ENCODE measurements at regions of chr15 and their contacts with region 1.

Region 1: DNA sequence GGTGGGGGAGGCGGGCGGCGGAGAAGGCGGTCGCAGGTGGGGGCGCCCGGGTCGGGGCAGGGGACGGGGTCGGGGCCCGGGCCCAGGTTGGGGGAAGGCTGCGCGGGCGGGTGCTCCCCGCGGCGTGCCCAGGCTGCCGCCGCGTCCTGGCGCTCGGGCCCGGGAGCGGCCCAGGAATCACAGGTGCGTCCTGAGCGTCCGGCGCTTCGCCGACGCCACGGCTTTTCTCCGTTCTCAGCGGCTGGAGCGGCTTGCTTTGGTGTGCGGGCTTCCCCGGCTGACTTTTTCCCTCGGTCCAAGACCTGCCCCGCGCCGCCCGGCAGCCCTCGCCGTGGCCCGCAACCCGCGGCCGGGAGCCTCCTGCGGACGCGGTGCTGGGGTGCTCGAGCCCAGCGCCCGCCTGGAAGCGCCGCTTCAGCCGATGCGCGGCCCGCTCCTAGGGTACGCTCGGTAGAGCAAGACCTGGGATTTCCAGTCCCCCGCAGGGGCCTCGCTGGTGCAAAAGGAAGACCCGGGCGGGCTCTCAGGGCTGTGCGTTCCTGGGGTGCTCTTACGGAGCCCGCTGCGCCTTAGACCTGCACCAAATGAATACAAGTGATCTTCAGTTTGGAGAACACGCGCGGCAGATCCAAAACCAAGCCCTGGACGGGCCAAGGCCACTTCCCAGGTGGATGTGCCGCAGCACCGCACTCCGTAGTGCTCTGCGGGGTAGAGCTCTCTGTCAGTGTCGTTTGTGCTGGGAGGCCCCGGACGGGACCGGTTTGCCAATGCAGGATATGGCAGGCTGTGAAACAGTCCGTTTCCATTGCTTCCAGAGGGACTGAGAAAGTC is 639 bp downstream of the NIPA1 start:
- DNase-seq: peak in 2 of 3 donors; percentile 65 to 69
- ATAC-seq: peak; percentile 27 to 38
- H3K4me3 ChIP-seq: peak overlapping the region; percentile 96
- H3K27ac ChIP-seq: peak overlapping the region; percentile 2
- H3K4me1 ChIP-seq: no peaks in the 10 kb centered on the region
- H3K27me3 ChIP-seq: no peaks in the 10 kb centered on the region

Region 2: DNA sequence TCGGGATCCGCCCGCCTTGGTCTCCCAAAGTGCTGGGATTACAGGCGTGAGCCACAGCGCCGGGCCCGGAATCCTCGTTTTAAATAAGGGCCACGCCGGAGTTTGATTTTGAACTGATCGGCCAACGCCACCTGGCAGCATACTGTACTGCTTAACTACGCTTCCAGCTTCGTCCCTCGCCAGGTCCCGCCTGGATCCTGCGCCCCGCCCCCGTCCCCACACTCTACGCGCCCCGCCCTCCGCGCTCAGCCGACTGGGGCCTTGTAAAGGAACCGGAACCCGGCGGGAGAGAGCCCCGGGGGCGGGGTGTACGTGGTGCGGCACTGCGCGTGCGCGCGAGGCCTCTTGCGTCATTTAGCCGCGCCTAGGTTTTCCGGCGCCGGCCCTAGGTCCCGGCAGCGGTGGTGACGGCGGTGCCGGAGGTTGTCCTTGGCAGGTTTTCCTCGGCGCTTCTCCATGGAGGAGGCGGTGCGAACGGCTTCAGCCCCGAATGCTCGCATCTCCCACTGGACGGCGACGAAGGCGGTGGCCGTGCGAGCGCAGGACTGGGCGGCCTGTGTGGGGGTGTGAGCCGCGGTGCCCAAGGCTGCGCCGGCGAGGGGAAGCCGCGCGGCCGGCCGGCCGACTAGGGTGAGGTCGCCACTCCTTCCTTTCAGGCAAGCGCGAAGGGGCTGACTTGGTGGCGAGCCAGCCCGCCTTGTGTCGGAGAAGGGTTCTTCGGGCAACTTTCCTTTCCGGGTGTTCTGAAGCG is 51.4 kb after region 1 on chr15 and contains the start of gene NIPA2:
- intact Hi-C with region 1: loop called in 1 of 4 experiments (anchors 10 kb)
- DNase-seq: peak; percentile 99 to 100 (median 100)
- ATAC-seq: peak; percentile 99 to 100
- H3K4me3 ChIP-seq: peak within 1 kb of the TSS; percentile 81
- H3K27ac ChIP-seq: peak within 1 kb of the TSS; percentile 83
- H3K4me1 ChIP-seq: peaks cover 2% of the 10 kb centered on the region
- H3K27me3 ChIP-seq: no peaks in the 10 kb centered on the region
- total RNA-seq, gene NIPA2: 19.9 to 29.9 (median 25.0) TPM